Gastrocnemius medialis (tissue), 4 donors: ENCODE measurements at regions of chr22 and their contacts with region 1.

Region 1: GRCh38 chr22:33519071-33519973 is 401.0 kb downstream of the LARGE1 start:
- DNase-seq: no peak
- ATAC-seq: peak; percentile 59 to 71
- H3K4me3 ChIP-seq: no peak overlapping the region
- H3K27ac ChIP-seq: no peak overlapping the region
- H3K4me1 ChIP-seq: peaks cover 4 to 11% of the 10 kb centered on the region in 2 donors
- H3K27me3 ChIP-seq: no peaks in the 10 kb centered on the region
- CTCF ChIP-seq: peak; percentile 31 to 71 (median 63)
- POLR2A ChIP-seq: no peak

Region 2: GRCh38 chr22:33337524-33337923 is 181.8 kb before region 1 on chr22:
- in situ Hi-C with region 1: no loop called
- intact Hi-C with region 1: no loop called
- DNase-seq: no peak
- ATAC-seq: no peak
- H3K4me3 ChIP-seq: no peak overlapping the region
- H3K27ac ChIP-seq: no peak overlapping the region
- H3K4me1 ChIP-seq: no peaks in the 10 kb centered on the region
- H3K27me3 ChIP-seq: no peaks in the 10 kb centered on the region
- CTCF ChIP-seq: no peak
- POLR2A ChIP-seq: no peak

Region 3: GRCh38 chr22:33579448-33580093 is 60.2 kb after region 1 on chr22:
- in situ Hi-C with region 1: loop called in 2 of 4 experiments (anchors 5 kb)
- intact Hi-C with region 1: loop called (anchors 1 kb)
- DNase-seq: peak in 1 of 2 donors; percentile 34
- ATAC-seq: peak; percentile 70 to 87
- H3K4me3 ChIP-seq: no peak overlapping the region
- H3K27ac ChIP-seq: no peak overlapping the region
- H3K4me1 ChIP-seq: peaks cover 0 to 9% of the 10 kb centered on the region in 2 donors
- H3K27me3 ChIP-seq: no peaks in the 10 kb centered on the region
- CTCF ChIP-seq: peak; percentile 84 to 94 (median 86)
- POLR2A ChIP-seq: no peak

Region 4: DNA sequence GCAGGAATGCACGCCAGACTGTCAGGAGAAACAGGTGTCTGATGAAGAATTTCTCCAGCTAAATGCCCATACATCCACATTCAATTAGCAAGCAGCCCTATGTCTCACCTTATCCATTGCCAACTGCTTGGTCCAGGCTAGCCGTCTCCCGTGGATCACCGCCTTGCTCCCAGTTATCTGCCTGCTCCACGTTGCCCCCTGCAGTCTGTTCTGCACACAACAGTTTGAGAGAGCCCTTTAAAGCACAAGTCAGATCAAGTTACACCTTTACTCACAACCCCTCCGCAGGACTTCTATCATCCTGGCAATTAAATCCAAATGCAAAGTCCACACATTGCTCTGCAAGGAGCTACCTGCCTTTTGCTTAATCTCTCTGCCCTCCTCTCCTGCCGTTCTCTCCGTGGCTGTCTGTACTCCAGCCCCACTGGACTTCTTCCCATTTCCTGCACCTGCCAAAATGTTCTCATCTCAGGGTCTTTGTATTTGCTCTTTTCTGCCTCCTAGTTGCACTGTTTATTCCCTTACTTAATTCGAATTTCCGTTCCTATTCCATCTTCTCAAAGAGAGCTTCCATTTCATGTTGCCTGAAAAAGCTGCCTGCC is 586.2 kb after region 1 on chr22:
- in situ Hi-C with region 1: loop called in 2 of 4 experiments (anchors 25 kb)
- intact Hi-C with region 1: loop called (anchors 5 kb)
- DNase-seq: peak in 1 of 2 donors; percentile 28
- ATAC-seq: peak; percentile 45 to 66
- H3K4me3 ChIP-seq: no peak overlapping the region
- H3K27ac ChIP-seq: no peak overlapping the region
- H3K4me1 ChIP-seq: no peaks in the 10 kb centered on the region
- H3K27me3 ChIP-seq: peaks cover 0 to 10% (median 0%) of the 10 kb centered on the region in 3 donors
- CTCF ChIP-seq: peak in 4 of 5 experiments; percentile 36 to 61 (median 52)
- POLR2A ChIP-seq: no peak

Region 5: DNA sequence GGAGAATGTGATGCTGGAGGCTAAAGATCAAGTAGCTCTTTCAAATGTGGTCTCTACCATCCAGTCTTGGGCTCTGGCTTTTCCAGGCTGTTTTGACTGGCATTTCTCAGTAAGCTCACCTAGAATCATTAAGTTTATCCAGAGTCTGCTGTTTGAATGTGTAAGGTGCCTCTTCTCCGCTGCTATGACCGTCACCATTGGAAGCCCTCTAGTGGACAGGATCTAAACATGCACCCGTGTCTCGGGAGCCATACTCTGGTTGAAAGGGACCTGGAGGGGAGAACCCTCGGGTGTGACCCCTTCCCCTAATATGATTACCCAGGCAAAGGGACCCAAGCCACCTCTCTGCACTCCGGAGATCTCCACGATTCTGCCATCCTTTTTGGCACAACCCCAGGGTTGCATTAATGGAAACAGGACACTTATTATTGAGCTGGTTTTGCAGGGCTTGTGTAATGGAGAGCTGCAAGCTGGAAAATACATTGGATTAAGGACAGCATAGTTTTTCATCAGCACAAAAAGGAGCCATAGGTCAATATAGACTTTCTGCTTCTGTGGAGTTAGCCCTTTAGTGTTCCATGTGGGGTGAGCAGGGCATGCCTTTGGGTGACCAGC is 592.0 kb after region 1 on chr22:
- in situ Hi-C with region 1: loop called in 2 of 4 experiments (anchors 25 kb)
- intact Hi-C with region 1: loop called (anchors 5 kb)
- DNase-seq: peak in 1 of 2 donors; percentile 13
- ATAC-seq: peak; percentile 63 to 64
- H3K4me3 ChIP-seq: no peak overlapping the region
- H3K27ac ChIP-seq: no peak overlapping the region
- H3K4me1 ChIP-seq: no peaks in the 10 kb centered on the region
- H3K27me3 ChIP-seq: peaks cover 0 to 5% (median 0%) of the 10 kb centered on the region in 3 donors
- CTCF ChIP-seq: peak; percentile 30 to 72 (median 54)
- POLR2A ChIP-seq: no peak